ENCODE measurements at regions of chr15 and their contacts with region 1.

Region 1: GRCh38 chr15:69090197-69090948 is 70.1 kb upstream of the GLCE start:
- DNase-seq: peak in 1 of 2 experiments; percentile 34
- ATAC-seq: no peak
- H3K4me3 ChIP-seq: no peak overlapping the region
- H3K27ac ChIP-seq: peak overlapping the region in 1 of 2 experiments; percentile 80; a peak in 3 of 6 replicates
- H3K4me1 ChIP-seq: peaks cover 51% of the 10 kb centered on the region
- CTCF ChIP-seq: no peak
- EP300 ChIP-seq: no peak
- POLR2A ChIP-seq: no peak
- RAD21 ChIP-seq: no peak

Region 2: DNA sequence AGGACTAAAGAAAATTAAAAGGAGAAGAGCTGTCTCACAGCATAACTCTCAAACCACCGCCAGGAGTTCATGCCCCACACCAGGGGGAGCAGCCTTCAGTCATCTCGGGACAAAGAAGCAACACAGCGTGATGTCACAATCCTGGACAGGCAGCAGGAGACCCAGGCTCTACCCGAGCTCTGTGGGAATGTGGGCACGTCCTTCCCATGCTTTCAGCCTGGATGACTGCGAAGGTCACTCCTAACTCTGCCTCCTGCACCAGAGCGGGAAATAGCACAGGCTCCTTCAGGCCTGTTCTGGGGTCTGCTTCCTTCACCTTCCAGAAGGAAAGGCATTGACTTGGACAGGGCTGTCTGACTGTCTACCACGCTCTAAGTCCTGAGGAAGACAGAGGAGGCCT is 44.6 kb before region 1 on chr15:
- CTCF ChIA-PET with region 1: no interaction called
- POLR2A ChIA-PET with region 1: no interaction called
- DNase-seq: peak in 1 of 2 experiments; percentile 58
- ATAC-seq: peak; percentile 67 to 89; a peak in 5 of 6 replicates
- H3K4me3 ChIP-seq: no peak overlapping the region
- H3K27ac ChIP-seq: peak overlapping the region in 1 of 2 experiments; percentile 65; a peak in 3 of 6 replicates
- H3K4me1 ChIP-seq: peaks cover 24% of the 10 kb centered on the region
- CTCF ChIP-seq: no peak
- EP300 ChIP-seq: no peak
- POLR2A ChIP-seq: no peak
- RAD21 ChIP-seq: no peak

Region 3: DNA sequence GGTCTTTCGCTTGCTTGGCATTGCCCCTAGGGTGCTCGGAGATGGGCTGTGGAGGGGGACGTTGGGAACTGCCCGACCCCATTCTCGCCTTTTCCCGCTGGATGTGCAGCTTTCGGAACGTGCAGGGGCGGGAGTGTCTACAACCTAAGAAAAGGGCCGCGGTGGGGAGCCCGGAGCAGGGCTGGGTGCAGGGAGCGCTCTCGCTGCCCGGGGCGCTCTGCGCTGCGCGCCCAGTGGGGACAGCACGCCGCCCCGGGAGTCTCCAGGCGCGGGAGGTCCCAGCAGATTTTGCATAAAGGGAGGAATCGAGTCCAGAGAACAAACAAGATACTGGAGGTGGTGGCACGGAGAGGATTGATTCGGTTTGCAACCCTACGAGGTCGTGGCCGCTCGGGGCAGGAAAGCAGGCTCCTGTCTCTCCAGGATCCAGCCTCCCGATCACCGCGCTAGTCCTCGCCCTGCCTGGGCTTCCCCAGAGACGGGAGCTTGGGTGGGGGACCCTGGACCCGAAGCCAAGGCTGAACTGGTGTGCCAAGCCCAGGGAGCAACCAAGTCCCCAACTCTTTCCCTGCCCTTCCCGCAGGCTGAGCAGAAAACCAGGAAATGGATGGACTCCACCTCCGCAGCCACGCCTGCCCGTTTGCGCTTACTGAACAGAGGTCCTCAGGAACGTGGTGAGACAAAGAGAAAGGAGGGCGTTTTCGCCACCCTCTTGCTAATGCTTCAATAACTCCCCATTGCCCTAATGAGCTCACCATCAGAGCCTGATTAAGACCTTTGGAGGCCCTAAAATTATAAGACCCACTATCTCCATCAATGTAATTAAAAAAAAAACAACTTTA is 16.2 kb before region 1 on chr15:
- CTCF ChIA-PET with region 1: interaction called, 11 read pairs
- POLR2A ChIA-PET with region 1: no interaction called
- DNase-seq: peak; percentile 86
- ATAC-seq: peak; percentile 93 to 96
- H3K4me3 ChIP-seq: peak overlapping the region; percentile 57
- H3K27ac ChIP-seq: peak overlapping the region; percentile 87 to 90
- H3K4me1 ChIP-seq: peaks cover 8% of the 10 kb centered on the region
- CTCF ChIP-seq: 0 out of 3 replicates have a peak, but pooled peaks have one; percentile 5
- EP300 ChIP-seq: no peak
- POLR2A ChIP-seq: peak; percentile 93
- RAD21 ChIP-seq: peak; percentile 12 to 41; a peak in 3 of 5 replicates

Region 4: GRCh38 chr15:69117431-69117871 is 27.1 kb after region 1 on chr15:
- CTCF ChIA-PET with region 1: no interaction called
- POLR2A ChIA-PET with region 1: no interaction called
- DNase-seq: no peak
- ATAC-seq: no peak
- H3K4me3 ChIP-seq: no peak overlapping the region
- H3K27ac ChIP-seq: no peak overlapping the region
- H3K4me1 ChIP-seq: no peaks in the 10 kb centered on the region
- CTCF ChIP-seq: no peak
- EP300 ChIP-seq: no peak
- POLR2A ChIP-seq: no peak
- RAD21 ChIP-seq: no peak

Region 5: DNA sequence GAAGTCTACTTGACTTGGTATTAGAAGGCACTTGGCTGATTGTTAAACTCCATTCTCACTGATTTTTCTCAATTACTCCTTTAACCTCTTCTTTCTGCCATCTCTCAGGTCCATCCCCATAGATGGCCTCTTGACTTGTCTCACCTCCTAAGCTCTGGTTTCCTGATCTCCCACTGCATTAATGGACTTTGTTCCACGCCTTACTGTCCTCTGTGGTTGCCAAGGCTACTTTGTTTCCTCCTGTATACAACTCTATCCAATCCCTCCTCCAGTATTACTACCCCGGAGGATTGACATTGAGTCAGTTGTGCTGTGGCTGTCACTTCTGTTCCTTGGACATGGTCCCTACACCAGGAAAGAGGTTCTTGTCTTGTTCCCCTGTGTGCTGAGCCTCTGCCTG is 59.4 kb after region 1 on chr15:
- CTCF ChIA-PET with region 1: no interaction called
- POLR2A ChIA-PET with region 1: no interaction called
- DNase-seq: no peak
- ATAC-seq: peak in 1 of 2 experiments; percentile 28; a peak in 2 of 6 replicates
- H3K4me3 ChIP-seq: no peak overlapping the region
- H3K27ac ChIP-seq: no peak overlapping the region
- H3K4me1 ChIP-seq: peaks cover 6% of the 10 kb centered on the region
- CTCF ChIP-seq: no peak
- EP300 ChIP-seq: no peak
- POLR2A ChIP-seq: no peak
- RAD21 ChIP-seq: no peak